ENCODE measurements at regions of chr11 and their contacts with region 1.

Region 1: DNA sequence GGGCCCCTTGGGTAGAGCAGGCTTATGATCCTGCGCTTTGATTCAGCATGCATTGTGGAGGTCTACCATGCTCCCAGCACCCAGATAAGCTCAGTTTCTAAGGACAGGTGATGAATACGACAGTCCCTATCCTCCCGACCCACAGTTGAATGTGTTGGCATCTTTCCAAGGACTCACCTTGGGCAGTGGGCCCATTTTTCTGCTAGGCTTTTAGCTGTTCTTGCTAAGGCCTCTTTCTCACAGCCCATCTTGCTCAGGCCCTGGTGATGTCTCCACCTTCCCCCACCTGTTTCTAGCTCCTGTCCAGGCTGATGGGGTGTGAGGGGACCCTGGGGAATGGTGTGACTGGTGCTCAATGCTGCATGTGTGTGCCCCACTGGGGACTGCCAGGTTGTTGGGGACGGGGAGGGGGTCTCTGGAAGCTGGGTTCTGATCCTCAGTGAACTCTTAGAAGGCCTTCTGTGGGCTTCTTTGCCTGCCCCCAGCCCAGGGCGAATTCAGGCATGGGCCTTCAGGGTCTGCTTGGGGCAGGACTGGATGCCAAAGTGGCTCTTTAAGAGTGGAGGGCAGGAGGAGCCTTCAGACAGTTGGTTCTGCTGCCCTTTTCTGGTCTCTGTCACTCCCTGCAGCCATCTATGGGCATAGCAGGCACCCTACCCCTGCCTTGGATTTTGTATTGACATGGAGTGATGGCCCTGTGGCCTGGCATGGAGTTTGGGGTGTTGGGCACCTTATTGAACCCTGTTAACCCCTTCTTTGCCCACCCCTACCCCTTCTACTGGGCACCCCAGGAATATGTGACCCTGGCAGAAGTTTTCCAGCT is 33.1 kb downstream of the PHLDB1 start:
- DNase-seq: peak in 1 of 2 experiments; percentile 47
- H3K4me3 ChIP-seq: no peak overlapping the region
- H3K4me3 Mint-ChIP-seq: no peak overlapping the region
- H3K27ac Mint-ChIP-seq: no peak overlapping the region
- H3K4me1 ChIP-seq: no peaks in the 10 kb centered on the region
- H3K4me1 Mint-ChIP-seq: no peaks in the 10 kb centered on the region
- H3K27me3 ChIP-seq: no peaks in the 10 kb centered on the region
- H3K27me3 Mint-ChIP-seq: no peaks in the 10 kb centered on the region
- CTCF ChIP-seq: peak; percentile 29 to 62

Region 2: GRCh38 chr11:118592616-118593367 is 47.8 kb before region 1 on chr11:
- CTCF ChIA-PET with region 1: interaction called, 7 read pairs
- POLR2A ChIA-PET with region 1: no interaction called
- intact Hi-C with region 1: loop called (anchors 1 kb)
- DNase-seq: no peak
- H3K4me3 ChIP-seq: no peak overlapping the region
- H3K4me3 Mint-ChIP-seq: no peak overlapping the region
- H3K27ac Mint-ChIP-seq: no peak overlapping the region
- H3K4me1 ChIP-seq: no peaks in the 10 kb centered on the region
- H3K4me1 Mint-ChIP-seq: peaks cover 4% of the 10 kb centered on the region
- H3K27me3 ChIP-seq: no peaks in the 10 kb centered on the region
- H3K27me3 Mint-ChIP-seq: no peaks in the 10 kb centered on the region
- CTCF ChIP-seq: no peak

Measured in Caco-2 (cell line).